ENCODE measurements at regions of chr2 and their contacts with region 1.

Region 1: GRCh38 chr2:239035361-239036078 is 187.6 kb downstream of the TWIST2 start:
- DNase-seq: peak in 41 of 42 donors; percentile 45 to 91 (median 76)

Region 2: DNA sequence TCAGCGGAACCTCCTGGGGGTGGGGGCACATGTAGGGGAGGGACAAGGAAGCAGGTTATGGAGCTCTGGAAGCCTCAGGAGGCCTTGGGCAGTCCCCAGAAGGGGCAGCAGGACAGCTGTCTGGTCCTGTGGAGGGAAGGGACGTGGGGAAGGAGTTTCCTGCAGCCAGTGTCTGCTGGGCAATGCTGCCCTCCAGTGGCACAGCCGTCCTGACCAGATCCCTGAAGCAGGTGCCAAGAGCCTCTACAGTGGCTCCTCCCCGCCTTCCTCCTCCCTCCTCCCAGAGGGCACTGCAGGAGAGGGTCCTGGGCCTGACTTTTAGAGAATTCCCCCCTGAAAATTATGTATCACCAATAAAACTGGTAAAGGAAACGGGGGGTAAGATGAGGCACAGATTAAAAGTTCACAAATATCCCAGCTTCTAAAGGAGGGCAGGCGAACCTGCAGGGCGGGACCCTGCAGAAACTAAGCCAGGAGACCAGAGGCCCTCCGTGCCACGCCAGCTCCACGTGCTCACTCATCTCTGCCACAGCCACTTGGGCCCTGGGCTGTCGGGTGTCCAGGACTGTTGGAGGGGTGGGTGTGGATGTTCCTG is 70.9 kb after region 1 on chr2:
- intact Hi-C with region 1: loop called (anchors 2 kb)
- DNase-seq: peak; percentile 62 to 95 (median 86)